ENCODE measurements at regions of chr20 and their contacts with region 1.

Region 1: DNA sequence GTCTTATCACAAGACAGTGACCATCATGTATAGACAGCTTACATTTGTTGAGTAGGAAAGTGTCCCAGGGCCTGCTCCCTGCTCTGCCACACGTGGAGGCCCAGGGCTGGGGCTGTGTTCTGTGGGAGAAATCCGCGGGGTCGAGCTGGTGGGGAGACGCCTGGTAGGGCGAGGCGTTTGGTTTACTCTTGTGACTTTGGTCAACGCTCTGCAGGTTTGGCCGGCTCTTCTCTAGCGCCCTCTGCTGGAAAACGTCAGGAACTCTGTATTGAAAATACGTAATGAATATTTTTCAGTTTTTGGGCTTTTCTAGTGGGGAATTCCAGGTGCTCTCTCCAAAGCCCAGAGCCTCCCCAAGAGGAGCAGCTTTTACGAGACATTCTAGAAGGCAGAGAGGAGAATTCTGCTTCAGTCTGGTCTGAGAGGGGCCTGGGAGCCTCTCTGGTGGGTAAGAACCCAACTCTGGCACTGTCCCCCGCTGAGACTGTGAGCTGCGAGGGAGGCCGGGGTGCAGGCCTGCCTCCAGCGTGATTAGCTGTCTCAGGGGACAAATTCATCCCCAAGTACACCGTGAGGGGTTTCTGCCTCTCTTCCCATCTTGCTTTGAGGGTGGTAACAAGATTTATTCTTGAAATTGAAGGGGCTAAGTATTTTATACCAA is 112.6 kb upstream of the RALGAPA2 start:
- DNase-seq: peak; percentile 66
- H3K4me3 Mint-ChIP-seq: no peak overlapping the region
- H3K27ac Mint-ChIP-seq: no peak overlapping the region
- H3K4me1 Mint-ChIP-seq: peaks cover 16% of the 10 kb centered on the region
- H3K27me3 Mint-ChIP-seq: peaks cover 15% of the 10 kb centered on the region
- CTCF ChIP-seq: peak; percentile 79

Region 2: DNA sequence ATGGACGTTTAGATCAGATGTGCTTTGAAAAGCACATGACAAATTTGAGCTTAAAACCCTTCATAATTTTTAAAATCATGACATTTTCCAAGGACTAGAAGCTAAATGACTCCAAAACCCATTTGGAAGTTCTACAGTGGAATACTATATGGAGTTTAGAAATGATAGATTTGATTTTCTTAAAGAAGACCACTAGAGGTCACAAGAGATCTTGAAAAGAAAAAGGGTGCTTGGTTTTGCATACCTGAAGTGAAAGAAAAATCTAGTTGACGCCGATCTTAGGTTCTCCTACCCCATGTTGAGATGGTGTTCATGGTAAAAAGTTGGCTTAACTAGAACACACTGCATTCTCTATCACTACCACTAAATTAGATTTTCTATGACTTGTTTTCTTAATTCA is 741.2 kb before region 1 on chr20:
- CTCF ChIA-PET with region 1: no interaction called
- POLR2A ChIA-PET with region 1: no interaction called
- intact Hi-C with region 1: loop called (anchors 10 kb)
- DNase-seq: peak; percentile 56
- H3K4me3 Mint-ChIP-seq: peak overlapping the region; percentile 20
- H3K27ac Mint-ChIP-seq: peak overlapping the region; percentile 95
- H3K4me1 Mint-ChIP-seq: peaks cover 44% of the 10 kb centered on the region
- H3K27me3 Mint-ChIP-seq: no peaks in the 10 kb centered on the region
- CTCF ChIP-seq: peak; percentile 55

Region 3: DNA sequence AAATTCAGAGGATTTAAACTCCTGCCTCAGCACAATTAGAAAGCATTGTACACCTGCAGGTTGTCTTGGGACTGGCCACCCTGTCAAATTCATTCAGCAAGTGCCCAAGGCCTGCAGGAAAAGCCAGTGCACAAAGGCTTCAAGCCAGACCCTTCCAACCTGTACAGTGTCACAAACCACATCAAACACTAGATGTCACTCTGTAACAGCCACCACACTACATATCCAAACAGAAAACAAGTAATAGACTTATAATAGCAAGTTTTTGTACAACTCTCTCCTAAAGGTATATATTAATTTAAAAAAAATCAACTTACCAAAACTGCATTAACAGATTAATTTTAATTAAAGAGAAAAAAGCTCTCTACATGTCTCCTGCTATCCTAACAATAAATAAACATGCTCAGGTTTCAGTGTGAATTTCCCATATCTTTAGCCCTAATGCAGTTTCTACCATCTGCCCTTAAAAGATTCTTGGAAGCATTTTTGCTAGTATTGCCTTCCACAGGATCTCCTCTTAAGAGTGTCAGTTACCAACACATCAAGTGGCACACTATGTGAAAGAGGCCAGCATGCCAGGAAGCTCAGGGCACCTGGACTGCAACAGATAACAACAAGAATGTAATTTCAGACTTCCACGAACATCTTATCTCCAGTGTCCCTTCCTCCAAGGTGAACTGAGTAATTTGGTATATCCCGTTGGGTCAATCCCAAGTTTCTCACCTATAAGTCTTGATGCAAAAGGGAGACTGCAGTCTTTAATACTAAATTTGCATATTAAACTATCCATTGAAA is 160.1 kb before region 1 on chr20:
- CTCF ChIA-PET with region 1: interaction called, 373 read pairs
- POLR2A ChIA-PET with region 1: interaction called, 15 read pairs
- intact Hi-C with region 1: loop called (anchors 1 kb)
- DNase-seq: peak; percentile 51
- H3K4me3 Mint-ChIP-seq: no peak overlapping the region
- H3K27ac Mint-ChIP-seq: no peak overlapping the region
- H3K4me1 Mint-ChIP-seq: no peaks in the 10 kb centered on the region
- H3K27me3 Mint-ChIP-seq: no peaks in the 10 kb centered on the region
- CTCF ChIP-seq: peak; percentile 75

Region 4: DNA sequence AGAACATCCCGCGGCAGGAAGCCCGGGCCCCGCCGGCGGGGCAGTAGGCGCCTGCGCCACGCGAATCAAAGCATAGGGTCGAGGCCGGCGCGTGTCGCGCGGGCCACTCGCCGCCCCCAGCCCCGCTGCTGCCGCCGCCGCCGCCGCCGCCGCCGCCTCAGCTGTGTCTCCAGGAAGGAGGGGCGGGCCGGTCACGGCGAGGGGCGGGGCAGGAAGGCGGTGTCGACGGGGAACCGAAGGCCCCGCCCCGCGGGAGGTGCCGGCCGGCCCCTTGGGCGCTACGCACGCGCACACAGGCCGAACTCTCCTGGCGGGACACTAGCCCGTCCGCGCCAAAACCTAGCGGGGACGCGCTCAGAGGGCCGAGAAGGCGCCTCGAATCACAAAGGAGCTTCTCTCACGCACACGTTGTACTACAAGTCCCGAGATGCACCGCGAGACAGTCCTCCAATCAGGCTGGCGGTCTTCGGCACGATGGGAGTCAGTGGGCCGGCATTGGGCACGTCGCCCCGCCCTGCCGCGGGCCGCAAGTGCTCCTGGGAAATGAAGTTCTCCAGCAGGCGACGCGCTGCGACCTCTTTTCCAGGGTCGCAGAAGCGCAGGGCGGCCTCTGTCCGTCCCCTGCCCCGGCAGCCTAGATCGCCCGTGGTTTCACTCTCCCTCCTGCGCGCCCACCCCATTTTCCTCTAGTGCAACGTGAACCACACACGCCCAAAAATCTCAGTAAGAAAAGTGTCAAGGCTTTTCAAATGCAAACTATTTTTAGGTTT is 112.4 kb before region 1 on chr20 and contains the start of gene RALGAPA2:
- CTCF ChIA-PET with region 1: interaction called, 67 read pairs
- POLR2A ChIA-PET with region 1: interaction called, 14 read pairs
- intact Hi-C with region 1: loop called (anchors 1 kb)
- DNase-seq: peak; percentile 97
- H3K4me3 Mint-ChIP-seq: peak within 1 kb of the TSS; percentile 87
- H3K27ac Mint-ChIP-seq: peak within 1 kb of the TSS; percentile 91
- H3K4me1 Mint-ChIP-seq: peaks cover 16% of the 10 kb centered on the region
- H3K27me3 Mint-ChIP-seq: no peaks in the 10 kb centered on the region
- CTCF ChIP-seq: no peak
- total RNA-seq, gene RALGAPA2: 9.8 and 12.1 TPM in 2 replicates

Region 5: GRCh38 chr20:20780127-20780824 is 44.8 kb before region 1 on chr20:
- CTCF ChIA-PET with region 1: interaction called, 45 read pairs
- POLR2A ChIA-PET with region 1: interaction called, 9 read pairs
- intact Hi-C with region 1: loop called (anchors 1 kb)
- DNase-seq: peak; percentile 98
- H3K4me3 Mint-ChIP-seq: peak overlapping the region; percentile 59
- H3K27ac Mint-ChIP-seq: peak overlapping the region; percentile 57
- H3K4me1 Mint-ChIP-seq: peaks cover 19% of the 10 kb centered on the region
- H3K27me3 Mint-ChIP-seq: no peaks in the 10 kb centered on the region
- CTCF ChIP-seq: no peak

Region 6: GRCh38 chr20:20814685-20815084 is 10.4 kb before region 1 on chr20:
- CTCF ChIA-PET with region 1: interaction called, 36 read pairs
- POLR2A ChIA-PET with region 1: interaction called, 3 read pairs
- intact Hi-C with region 1: no loop called
- DNase-seq: peak; percentile 72
- H3K4me3 Mint-ChIP-seq: no peak overlapping the region
- H3K27ac Mint-ChIP-seq: no peak overlapping the region
- H3K4me1 Mint-ChIP-seq: peaks cover 6% of the 10 kb centered on the region
- H3K27me3 Mint-ChIP-seq: no peaks in the 10 kb centered on the region
- CTCF ChIP-seq: no peak